Posterior vena cava (tissue), 2 donors: ENCODE measurements at regions of chr7 and their contacts with region 1.

Region 1: GRCh38 chr7:36755484-36755883 is 31.2 kb upstream of the AOAH start:
- DNase-seq: no peak

Region 2: GRCh38 chr7:37770838-37771237 is 1015.4 kb after region 1 on chr7:
- intact Hi-C with region 1: loop called in 1 of 2 experiments (anchors 5 kb)
- DNase-seq: no peak